ENCODE measurements at regions of chr15 and their contacts with region 1.

Region 1: DNA sequence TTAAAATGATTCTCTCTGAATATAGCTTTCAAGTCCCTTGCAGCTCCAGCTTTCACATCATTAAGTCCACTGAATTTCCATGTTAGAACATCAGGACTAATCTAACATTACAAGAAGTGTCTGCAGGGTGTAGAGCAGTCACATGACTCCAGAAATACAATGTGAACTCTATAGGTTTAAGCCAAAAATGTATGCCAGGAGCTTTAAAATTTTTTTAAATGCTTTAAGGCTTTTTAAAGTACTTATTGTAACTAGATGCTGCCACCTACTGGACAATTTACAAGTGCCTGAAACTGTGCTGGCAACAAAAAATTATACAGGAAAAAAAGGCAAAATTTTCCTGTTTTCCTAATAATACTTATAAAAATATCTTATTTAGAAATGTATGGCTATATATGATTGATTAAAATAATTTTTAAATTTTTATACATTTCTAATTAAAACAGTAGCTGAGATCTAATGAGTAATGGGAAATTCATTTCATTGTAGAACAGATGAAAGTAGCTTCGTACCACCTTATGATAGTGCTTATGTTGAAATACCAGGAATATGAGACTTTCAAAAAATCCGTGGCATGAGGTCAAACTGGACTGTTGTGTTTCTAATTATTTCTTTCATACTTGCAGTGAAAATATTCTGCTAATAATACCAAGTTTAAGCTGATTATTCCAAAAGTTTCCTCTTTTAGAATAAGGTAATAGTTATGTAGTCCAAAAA is 25.7 kb downstream of the FSIP1 start:
- DNase-seq: no peak
- H3K4me3 ChIP-seq: no peak overlapping the region
- H3K27ac ChIP-seq: no peak overlapping the region
- H3K4me1 ChIP-seq: no peaks in the 10 kb centered on the region
- H3K27me3 ChIP-seq: no peaks in the 10 kb centered on the region
- CTCF ChIP-seq: peak; percentile 37 to 85 (median 68)

Region 2: DNA sequence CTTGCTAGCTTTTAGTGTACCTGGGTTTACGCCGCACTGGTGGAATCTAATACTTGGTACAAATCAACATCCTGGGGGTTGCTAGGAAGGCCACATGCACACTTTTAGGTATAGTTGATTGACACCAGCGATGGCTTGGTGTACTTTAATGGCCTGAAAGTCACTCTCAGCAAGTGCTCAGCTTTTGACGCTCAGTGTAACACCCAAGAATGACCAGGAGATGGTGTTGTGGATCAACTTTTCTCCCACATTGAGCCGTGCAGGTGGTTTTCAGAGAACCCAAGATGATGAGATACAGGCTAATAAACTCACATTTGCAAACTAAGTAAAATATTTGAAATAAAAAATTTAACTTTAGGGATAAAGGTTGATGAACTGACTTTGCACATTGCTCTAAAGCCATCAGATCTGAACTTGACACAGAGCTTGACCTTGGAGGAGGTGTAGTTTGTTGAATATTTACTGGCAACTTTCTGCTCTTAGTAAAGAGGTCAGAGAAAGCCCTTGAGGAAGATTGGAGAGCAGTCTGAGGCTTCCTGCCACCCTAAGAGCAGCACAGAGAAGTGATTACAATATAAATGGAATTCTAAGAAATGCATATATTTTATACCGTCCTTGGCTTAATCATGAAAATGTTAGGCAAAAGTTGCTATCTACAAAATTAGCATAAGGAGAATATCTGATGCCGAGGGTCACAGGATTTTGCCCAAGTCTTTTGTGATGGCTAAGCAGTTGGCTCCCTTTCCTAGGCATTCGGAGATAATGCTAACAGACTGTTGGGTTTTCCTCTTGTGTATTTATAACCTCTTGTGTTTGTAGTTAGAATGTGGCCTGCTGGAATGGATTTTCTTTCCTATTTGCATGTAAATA is 1048.9 kb before region 1 on chr15:
- intact Hi-C with region 1: loop called (anchors 2 kb)
- DNase-seq: no peak
- H3K4me3 ChIP-seq: no peak overlapping the region
- H3K27ac ChIP-seq: no peak overlapping the region
- H3K4me1 ChIP-seq: no peaks in the 10 kb centered on the region
- H3K27me3 ChIP-seq: no peaks in the 10 kb centered on the region
- CTCF ChIP-seq: peak; percentile 45 to 67 (median 47)

Region 3: GRCh38 chr15:38817427-38818156 is 939.4 kb before region 1 on chr15:
- intact Hi-C with region 1: loop called (anchors 5 kb)
- DNase-seq: peak; percentile 36 to 86
- H3K4me3 ChIP-seq: no peak overlapping the region
- H3K27ac ChIP-seq: no peak overlapping the region
- H3K4me1 ChIP-seq: no peaks in the 10 kb centered on the region
- H3K27me3 ChIP-seq: no peaks in the 10 kb centered on the region
- CTCF ChIP-seq: peak; percentile 94 to 96 (median 94)

Region 4: GRCh38 chr15:39594056-39594763 is 162.8 kb before region 1 on chr15:
- intact Hi-C with region 1: loop called (anchors 10 kb)
- DNase-seq: no peak
- H3K4me3 ChIP-seq: no peak overlapping the region
- H3K27ac ChIP-seq: no peak overlapping the region
- H3K4me1 ChIP-seq: no peaks in the 10 kb centered on the region
- H3K27me3 ChIP-seq: no peaks in the 10 kb centered on the region
- CTCF ChIP-seq: no peak

Region 5: DNA sequence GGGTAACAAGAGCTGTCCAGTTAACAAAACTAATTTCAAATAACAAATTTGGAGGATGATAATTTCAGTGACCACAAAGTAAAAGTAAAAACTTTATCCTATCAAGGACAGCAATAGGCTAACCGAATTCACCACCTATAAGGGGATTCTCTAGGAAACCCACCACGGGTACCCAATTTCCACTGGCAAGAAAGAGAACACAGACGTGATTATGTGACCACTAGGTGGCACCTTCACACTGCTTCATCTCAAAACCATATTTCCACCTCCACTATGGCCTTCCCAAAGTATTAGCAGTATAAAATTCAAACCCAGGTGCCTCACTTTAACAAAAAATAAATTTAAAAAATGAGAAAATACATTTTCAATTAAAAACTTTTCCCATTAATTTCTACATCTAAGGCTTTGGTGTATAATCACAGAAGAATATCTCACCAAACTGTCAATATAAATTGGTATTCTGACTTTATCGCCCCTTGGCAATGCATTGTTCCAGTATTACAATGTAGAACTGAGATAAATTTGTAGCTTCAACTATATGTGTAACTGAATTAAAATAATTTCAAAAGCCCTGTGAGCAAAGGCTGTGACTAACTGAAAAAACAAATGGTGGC is 70.9 kb before region 1 on chr15:
- intact Hi-C with region 1: loop called (anchors 2 kb)
- DNase-seq: no peak
- H3K4me3 ChIP-seq: no peak overlapping the region
- H3K27ac ChIP-seq: no peak overlapping the region
- H3K4me1 ChIP-seq: no peaks in the 10 kb centered on the region
- H3K27me3 ChIP-seq: no peaks in the 10 kb centered on the region
- CTCF ChIP-seq: peak; percentile 33 to 77 (median 66)

Region 6: DNA sequence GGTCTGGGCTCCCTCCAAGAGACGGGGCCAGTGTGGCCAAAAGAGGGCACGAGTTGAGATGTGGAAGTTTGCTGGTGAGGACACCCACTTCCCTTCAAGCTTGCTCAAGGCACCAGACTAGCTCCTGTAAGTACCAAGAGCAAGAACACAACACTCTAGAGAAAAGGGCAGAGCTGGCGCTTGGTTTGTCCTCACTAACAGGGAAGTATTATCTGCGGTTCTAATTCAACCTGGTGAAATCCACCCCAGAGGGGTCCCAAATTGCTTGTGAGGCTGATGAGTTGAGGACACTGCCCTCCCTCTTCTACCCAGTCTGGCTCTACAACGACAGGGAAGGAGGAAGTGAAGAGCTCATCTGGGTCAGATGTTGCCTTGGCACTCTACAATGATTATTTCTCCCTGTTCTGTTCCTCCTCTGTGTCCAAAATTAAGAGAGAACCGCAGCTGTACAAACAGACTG is 42.6 kb after region 1 on chr15:
- intact Hi-C with region 1: no loop called
- DNase-seq: no peak
- H3K4me3 ChIP-seq: no peak overlapping the region
- H3K27ac ChIP-seq: no peak overlapping the region
- H3K4me1 ChIP-seq: no peaks in the 10 kb centered on the region
- H3K27me3 ChIP-seq: no peaks in the 10 kb centered on the region
- CTCF ChIP-seq: no peak